HEK293T (cell line): ENCODE measurements at regions of chr6 and their contacts with region 1.

Region 1: GRCh38 chr6:35297601-35298481 is at the start of gene DEF6:
- DNase-seq: peak; percentile 89

Region 2: DNA sequence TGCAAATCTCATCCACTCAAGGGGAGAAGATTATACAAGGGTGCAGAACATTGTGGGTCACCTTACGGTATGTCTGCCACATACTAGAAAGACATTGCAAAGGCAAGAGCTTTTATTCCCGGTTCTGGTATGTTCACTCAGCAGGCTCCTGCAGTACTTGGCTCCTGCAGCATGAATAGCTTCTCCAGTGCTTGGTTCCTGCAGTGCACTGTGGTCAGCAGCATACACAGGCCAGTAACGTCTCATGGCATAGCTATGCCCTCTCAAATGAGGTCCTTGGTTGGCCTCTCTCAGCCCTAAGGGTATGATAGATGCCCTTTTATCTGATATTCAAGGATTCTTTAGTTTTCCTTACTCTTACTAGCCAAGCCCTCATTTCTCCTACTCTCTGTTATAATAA is 169.3 kb before region 1 on chr6:
- CTCF ChIA-PET with region 1: no interaction called
- POLR2A ChIA-PET with region 1: no interaction called
- DNase-seq: no peak

Region 3: DNA sequence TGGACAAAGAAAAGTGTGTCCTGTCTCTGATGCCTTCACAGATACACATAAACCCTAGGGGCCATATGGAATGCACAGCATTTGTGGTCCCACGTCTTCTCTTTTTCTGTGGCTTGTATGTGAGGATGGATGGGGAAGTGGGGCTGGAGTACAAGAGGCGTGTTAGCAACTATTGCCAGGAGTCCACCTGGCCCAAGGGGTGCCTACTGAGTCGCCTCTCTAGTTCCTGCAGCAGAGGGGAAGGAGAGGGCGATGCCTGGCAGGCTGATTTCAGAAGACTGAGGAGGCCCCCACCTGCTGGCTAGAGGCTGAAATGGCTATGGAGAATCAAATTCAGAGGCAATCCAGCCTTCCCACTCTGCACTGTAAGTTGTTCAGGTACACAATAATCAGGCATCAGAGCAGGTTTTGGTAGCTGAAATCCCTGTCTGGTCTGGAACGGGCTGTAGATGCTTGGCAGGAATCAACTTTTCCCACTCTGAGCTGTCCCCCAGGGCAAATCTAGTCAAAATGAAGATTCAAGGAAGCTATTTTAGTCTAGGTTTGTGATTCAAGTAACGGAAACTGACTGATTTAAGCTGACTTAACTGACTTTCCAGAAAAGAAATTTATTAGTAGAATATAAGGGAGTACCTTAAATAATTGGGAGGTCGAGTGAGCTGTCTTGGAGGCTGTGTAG is 29.6 kb after region 1 on chr6:
- CTCF ChIA-PET with region 1: interaction called, 13 read pairs
- POLR2A ChIA-PET with region 1: no interaction called
- DNase-seq: peak; percentile 72